Activated CD4-positive, alpha-beta memory T cell treated with anti-CD3 and anti-CD28 coated beads, Interleukin-2, amount 10 ng/mL, durations not matched to agents 7 days and 5 days (primary cell): ENCODE measurements at regions of chr15 and their contacts with region 1.

Region 1: GRCh38 chr15:64387562-64388168 is at the start of gene TRIP4:
- DNase-seq: peak; percentile 98
- H3K4me3 Mint-ChIP-seq: peak within 1 kb of the TSS; percentile 95
- H3K27ac Mint-ChIP-seq: peak within 1 kb of the TSS; percentile 85
- H3K4me1 Mint-ChIP-seq: peaks cover 22% of the 10 kb centered on the region
- H3K27me3 Mint-ChIP-seq: no peaks in the 10 kb centered on the region
- total RNA-seq, gene TRIP4: 28.9 to 30.3 TPM

Region 2: DNA sequence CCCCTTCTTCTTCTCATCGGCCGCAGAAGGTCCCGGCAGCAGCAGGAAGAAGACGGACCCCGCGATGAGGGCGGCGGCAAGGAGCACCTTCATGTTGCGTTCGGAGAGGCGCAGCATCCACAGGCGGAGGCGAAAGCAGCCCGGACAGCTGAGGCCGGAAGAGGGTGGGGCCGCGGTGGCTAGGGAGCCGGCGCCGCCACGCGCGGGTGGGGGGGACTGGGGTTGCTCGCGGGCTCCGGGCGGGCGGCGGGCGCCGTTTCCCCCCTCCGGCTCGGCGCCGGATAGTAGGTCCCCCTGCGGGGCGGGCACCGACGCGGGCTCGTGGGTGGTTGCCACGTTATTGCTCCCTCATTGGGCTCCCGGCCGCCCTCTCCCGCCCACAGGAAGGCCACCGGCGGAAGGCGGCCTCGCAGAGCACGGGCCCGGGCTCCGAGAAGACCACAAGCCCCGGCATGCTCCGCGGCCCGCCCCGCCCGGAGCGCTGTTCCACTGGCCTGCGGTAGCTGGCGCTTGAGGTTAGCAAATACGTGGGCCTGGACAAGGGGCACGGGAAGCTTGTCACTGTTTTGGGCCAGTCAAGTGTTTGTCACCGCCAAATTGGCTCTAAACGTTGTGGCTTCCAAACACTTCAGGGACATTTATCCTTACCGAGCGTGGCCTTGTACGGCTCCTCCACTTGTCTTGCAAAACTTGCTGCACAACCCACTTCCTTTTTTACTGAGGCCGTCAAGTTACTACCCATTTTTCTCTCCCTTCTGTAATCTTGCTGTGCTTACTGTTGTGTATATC is 224.6 kb before region 1 on chr15 and contains the start of gene PPIB:
- CTCF ChIA-PET with region 1: interaction called, 3 read pairs
- POLR2A ChIA-PET with region 1: interaction called, 39 read pairs
- DNase-seq: peak; percentile 98
- H3K4me3 Mint-ChIP-seq: peak within 1 kb of the TSS; percentile 83
- H3K27ac Mint-ChIP-seq: peak within 1 kb of the TSS; percentile 96
- H3K4me1 Mint-ChIP-seq: peaks cover 58% of the 10 kb centered on the region
- H3K27me3 Mint-ChIP-seq: no peaks in the 10 kb centered on the region
- total RNA-seq, gene PPIB: 392 to 410 TPM

Region 3: DNA sequence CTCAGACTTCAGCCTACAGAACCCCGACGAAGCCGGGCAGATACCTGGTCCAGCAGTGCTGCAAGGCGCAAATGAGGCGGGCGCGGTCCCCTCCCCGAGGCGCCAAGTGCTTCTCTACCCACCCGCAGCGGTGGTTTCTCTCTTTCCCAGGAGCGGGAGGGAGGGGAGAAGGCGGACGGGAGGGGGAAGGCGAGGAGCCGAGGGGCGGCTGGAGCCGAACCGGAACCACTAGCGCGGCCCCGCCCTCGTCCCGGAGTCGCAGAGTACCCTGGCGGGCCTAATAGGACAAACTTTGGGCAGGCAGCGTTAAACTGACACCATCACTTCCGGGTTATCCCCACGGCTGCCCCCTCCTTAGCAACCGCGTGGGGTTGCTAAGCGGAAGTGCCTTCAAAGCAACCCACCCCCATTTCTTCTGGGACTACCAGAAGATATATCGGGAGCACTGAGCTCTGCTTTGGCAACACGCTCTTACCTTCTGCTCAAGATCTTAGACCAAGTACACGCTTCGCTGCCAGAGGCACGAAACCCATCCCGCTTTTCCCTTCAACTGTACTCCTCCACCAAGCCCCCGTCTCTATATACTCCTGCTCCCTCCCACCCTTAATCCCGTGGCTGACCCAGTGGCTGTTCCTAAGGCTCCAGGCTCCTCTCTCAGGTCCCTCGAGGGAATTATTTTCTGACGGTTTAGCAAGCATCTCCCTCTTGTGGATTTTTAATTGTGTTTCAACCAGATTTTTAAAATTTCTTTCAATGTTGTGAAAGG is 31.5 kb before region 1 on chr15 and contains the start of gene CSNK1G1:
- CTCF ChIA-PET with region 1: interaction called, 5 read pairs
- POLR2A ChIA-PET with region 1: interaction called, 10 read pairs
- DNase-seq: peak; percentile 92
- H3K4me3 Mint-ChIP-seq: peak within 1 kb of the TSS; percentile 91
- H3K27ac Mint-ChIP-seq: peak within 1 kb of the TSS; percentile 78
- H3K4me1 Mint-ChIP-seq: peaks cover 35% of the 10 kb centered on the region
- H3K27me3 Mint-ChIP-seq: no peaks in the 10 kb centered on the region
- total RNA-seq, gene CSNK1G1: 27.9 to 28.2 TPM

Region 4: GRCh38 chr15:64430000-64430735 is 42.5 kb after region 1 on chr15:
- CTCF ChIA-PET with region 1: no interaction called
- POLR2A ChIA-PET with region 1: interaction called, 15 read pairs
- DNase-seq: peak; percentile 57
- H3K4me3 Mint-ChIP-seq: peak overlapping the region; percentile 31
- H3K27ac Mint-ChIP-seq: peak overlapping the region; percentile 90
- H3K4me1 Mint-ChIP-seq: peaks cover 37% of the 10 kb centered on the region
- H3K27me3 Mint-ChIP-seq: no peaks in the 10 kb centered on the region

Region 5: DNA sequence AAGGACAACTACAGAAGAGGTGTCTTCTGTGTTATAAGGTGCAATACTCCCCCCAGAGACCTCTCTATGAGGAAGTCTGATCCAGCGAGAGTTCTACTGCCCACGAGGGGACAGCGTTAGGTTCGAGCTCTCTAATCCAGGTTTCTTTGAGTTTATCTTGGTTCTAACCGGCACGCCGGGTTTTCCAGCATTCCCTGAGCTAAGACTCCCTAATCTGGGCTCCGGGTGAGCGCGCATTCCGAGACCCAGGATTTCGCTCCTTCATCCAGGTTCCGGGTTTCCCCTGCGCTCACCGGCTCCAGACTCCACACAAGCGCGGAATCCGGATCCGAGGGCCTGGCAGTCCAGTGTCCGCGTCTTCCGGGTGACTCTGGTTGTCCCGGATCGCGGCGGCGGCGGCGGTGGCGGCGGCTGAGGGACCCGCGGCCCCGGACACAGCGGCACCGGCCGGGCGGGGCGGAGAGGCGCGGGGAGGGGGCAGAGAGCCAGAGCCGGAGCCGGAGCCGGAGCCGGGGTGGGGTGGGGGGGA is 72.6 kb after region 1 on chr15 and contains the start of gene ZNF609:
- CTCF ChIA-PET with region 1: no interaction called
- POLR2A ChIA-PET with region 1: interaction called, 25 read pairs
- DNase-seq: peak; percentile 89
- H3K4me3 Mint-ChIP-seq: peak within 1 kb of the TSS; percentile 87
- H3K27ac Mint-ChIP-seq: peak within 1 kb of the TSS; percentile 72
- H3K4me1 Mint-ChIP-seq: peaks cover 42% of the 10 kb centered on the region
- H3K27me3 Mint-ChIP-seq: no peaks in the 10 kb centered on the region
- total RNA-seq, gene ZNF609: 30.0 to 34.1 TPM

Region 6: GRCh38 chr15:64596701-64597476 is 209.2 kb after region 1 on chr15:
- CTCF ChIA-PET with region 1: no interaction called
- POLR2A ChIA-PET with region 1: interaction called, 12 read pairs
- DNase-seq: peak; percentile 34
- H3K4me3 Mint-ChIP-seq: peak overlapping the region; percentile 72
- H3K27ac Mint-ChIP-seq: peak overlapping the region; percentile 86
- H3K4me1 Mint-ChIP-seq: peaks cover 44% of the 10 kb centered on the region
- H3K27me3 Mint-ChIP-seq: no peaks in the 10 kb centered on the region

Region 7: GRCh38 chr15:64651573-64652260 is 264.1 kb after region 1 on chr15:
- CTCF ChIA-PET with region 1: interaction called, 12 read pairs
- POLR2A ChIA-PET with region 1: interaction called, 3 read pairs
- DNase-seq: peak; percentile 29
- H3K4me3 Mint-ChIP-seq: no peak overlapping the region
- H3K27ac Mint-ChIP-seq: peak overlapping the region; percentile 61
- H3K4me1 Mint-ChIP-seq: peaks cover 19% of the 10 kb centered on the region
- H3K27me3 Mint-ChIP-seq: no peaks in the 10 kb centered on the region